ENCODE measurements at regions of chr13 and their contacts with region 1.

Region 1: GRCh38 chr13:75691183-75691582 is 55.1 kb downstream of the LMO7 start:
- DNase-seq: peak; percentile 75
- ATAC-seq: peak; percentile 60; the same call in 1 of the 2 replicates
- H3K4me3 ChIP-seq: no peak overlapping the region
- H3K27ac ChIP-seq: no peak overlapping the region
- H3K4me1 ChIP-seq: no peaks in the 10 kb centered on the region
- H3K27me3 ChIP-seq: no peaks in the 10 kb centered on the region
- CTCF ChIP-seq: no peak

Region 2: GRCh38 chr13:75798353-75799255 is 107.4 kb after region 1 on chr13:
- CTCF ChIA-PET with region 1: no interaction called
- POLR2A ChIA-PET with region 1: no interaction called
- in situ Hi-C with region 1: no loop called
- intact Hi-C with region 1: loop called (anchors 5 kb)
- DNase-seq: peak; percentile 57
- ATAC-seq: peak; percentile 95
- H3K4me3 ChIP-seq: no peak overlapping the region
- H3K27ac ChIP-seq: 0 out of 2 replicates have a peak overlapping the region, but pooled peaks have one; percentile 23
- H3K4me1 ChIP-seq: no peaks in the 10 kb centered on the region; the same call in 1 of the 2 replicates
- H3K27me3 ChIP-seq: no peaks in the 10 kb centered on the region
- CTCF ChIP-seq: no peak

Region 3: DNA sequence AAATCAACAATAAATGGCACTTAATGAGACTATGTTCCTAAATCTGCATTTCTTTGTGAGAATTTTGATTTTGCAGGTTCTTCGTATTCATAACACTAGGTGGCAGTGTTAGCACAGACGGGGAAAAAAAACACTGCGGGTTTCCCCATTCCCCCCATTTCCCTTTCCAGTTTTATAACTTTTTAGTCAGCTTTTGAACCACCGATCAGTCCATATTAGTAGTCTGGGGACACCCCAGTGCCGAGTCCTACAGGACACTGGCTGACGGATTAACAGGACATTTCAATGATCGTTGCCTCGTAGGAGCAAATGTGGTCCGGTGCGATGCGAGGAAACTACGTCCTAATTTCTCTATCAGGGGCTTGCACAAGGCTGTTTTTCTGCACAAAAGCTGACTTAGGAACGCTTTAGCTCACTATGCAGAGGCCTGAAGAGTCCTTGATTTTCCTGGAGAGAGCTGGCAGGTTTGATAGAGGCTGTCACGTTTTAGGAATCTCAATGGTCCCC is 179.3 kb after region 1 on chr13:
- CTCF ChIA-PET with region 1: interaction called, 4 read pairs
- POLR2A ChIA-PET with region 1: no interaction called
- in situ Hi-C with region 1: no loop called
- intact Hi-C with region 1: loop called (anchors 2 kb)
- DNase-seq: peak; percentile 13
- ATAC-seq: 0 out of 2 replicates have a peak, but pooled peaks have one; percentile 48
- H3K4me3 ChIP-seq: peak overlapping the region; percentile 44 to 65
- H3K27ac ChIP-seq: no peak overlapping the region
- H3K4me1 ChIP-seq: no peaks in the 10 kb centered on the region
- H3K27me3 ChIP-seq: no peaks in the 10 kb centered on the region
- CTCF ChIP-seq: peak; percentile 81

Region 4: DNA sequence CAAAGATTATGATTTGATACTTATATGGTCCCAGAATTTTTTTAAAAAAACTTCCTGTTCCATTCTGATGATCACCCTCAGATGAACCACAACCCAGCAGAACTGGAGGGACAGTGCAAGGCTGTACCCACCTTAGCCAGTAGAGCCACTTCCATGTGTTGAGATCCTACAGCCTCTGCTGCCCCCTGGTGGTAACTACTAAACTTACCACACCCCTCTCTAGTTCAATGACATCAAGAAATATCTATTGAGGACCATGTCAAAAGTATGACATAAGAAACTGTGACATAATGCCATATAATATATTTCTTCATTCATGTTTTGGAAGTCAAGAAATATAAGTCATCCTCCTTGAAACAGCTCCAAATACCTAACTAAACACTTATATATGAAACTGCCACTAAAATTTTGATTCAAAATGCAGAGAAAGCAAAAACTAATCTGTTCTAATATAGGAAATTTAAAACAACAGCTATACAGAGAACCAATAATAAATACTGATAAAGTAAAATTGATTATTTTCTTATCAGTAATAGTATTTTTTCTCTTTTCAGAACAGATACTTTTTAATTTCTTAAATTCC is 782.5 kb after region 1 on chr13:
- CTCF ChIA-PET with region 1: no interaction called
- POLR2A ChIA-PET with region 1: no interaction called
- in situ Hi-C with region 1: no loop called
- intact Hi-C with region 1: loop called (anchors 5 kb)
- DNase-seq: peak; percentile 38
- ATAC-seq: peak; percentile 91
- H3K4me3 ChIP-seq: no peak overlapping the region
- H3K27ac ChIP-seq: no peak overlapping the region
- H3K4me1 ChIP-seq: no peaks in the 10 kb centered on the region
- H3K27me3 ChIP-seq: no peaks in the 10 kb centered on the region; the same call in 1 of the 2 replicates
- CTCF ChIP-seq: peak; percentile 66

Region 5: GRCh38 chr13:76903544-76904162 is 1212.5 kb after region 1 on chr13:
- CTCF ChIA-PET with region 1: no interaction called
- POLR2A ChIA-PET with region 1: no interaction called
- in situ Hi-C with region 1: no loop called
- intact Hi-C with region 1: loop called (anchors 5 kb)
- DNase-seq: peak; percentile 67
- ATAC-seq: no peak
- H3K4me3 ChIP-seq: no peak overlapping the region
- H3K27ac ChIP-seq: no peak overlapping the region
- H3K4me1 ChIP-seq: no peaks in the 10 kb centered on the region
- H3K27me3 ChIP-seq: no peaks in the 10 kb centered on the region
- CTCF ChIP-seq: peak; percentile 87

Region 6: DNA sequence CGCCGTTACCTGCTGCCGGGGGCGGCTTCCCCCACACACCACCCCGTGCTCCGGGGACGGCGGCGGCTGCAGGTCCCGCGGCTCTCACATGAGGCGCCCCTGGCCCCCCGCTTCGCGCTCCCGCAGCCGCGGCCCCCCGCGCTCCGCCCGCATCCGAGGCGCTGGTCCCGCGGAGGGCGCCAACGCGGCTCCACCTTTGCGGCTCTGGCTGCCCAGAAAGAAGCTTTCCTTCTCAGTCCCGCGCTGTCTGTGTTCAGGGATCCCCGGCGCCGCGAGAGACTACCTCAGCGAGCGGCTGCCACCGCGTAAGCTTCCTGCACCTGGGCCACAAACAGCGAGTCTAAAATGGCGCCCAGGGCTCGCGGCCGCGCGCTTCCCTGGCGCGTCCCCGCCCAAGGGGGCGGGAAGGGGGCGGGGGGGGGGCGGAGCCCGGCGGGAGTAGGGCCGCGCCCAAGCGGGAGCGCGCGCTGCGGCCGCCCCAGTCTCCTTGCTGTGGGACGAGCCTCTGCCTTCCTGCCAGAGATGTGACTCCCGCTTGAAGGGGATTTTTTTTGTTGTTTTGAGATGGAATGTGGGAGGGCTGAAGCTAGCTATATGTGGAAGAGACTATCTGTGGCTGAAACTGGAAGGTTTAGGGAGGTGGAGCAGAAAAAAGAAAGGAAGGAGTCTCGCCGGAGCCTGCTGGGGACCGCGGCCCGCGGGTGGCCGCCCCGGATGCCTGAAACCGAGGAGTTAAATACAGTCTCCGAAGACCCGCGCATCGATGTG is 1335.8 kb after region 1 on chr13 and contains the start of gene FBXL3:
- CTCF ChIA-PET with region 1: no interaction called
- POLR2A ChIA-PET with region 1: interaction called, 10 read pairs
- in situ Hi-C with region 1: no loop called
- intact Hi-C with region 1: no loop called
- DNase-seq: no peak
- ATAC-seq: peak; percentile 92
- H3K4me3 ChIP-seq: peak within 1 kb of the TSS; percentile 77 to 83
- H3K27ac ChIP-seq: peak within 1 kb of the TSS; percentile 81
- H3K4me1 ChIP-seq: peaks cover 8% of the 10 kb centered on the region
- H3K27me3 ChIP-seq: no peaks in the 10 kb centered on the region
- CTCF ChIP-seq: no peak
- total RNA-seq, gene FBXL3: 18.5 TPM